ENCODE measurements at regions of chr9 and their contacts with region 1.

Region 1: DNA sequence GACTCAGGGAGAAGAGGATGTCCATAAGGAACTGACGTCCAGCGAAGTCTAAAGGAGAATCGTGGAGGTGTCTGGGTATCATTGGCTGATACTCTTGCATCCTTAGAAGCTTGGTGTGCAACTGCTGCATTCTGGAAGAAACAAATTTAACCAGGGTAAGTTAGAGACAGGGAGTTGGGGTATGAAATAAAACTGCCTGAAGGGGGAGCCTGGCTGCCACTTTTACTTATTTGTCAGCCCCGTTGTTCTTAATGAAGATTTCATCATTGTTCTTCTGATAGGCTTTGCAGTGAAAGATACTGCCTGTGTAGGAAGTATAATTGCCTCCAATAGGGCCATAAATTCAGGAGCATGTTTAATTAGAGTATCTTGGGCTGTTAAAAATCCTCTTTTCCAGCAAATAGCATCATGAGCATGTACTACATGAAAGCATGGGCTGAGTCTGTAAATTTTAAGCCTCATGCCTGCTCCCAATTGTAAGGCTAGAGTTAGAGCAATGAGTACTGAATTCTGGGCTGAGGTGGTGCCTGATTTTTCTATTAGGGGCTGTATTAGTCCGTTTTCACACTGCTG is 1264.5 kb upstream of the ACO1 start:
- DNase-seq: peak in 1 of 2 donors; percentile 5
- ATAC-seq: peak in 1 of 8 donors; percentile 51
- H3K4me3 ChIP-seq: no peak overlapping the region
- H3K27ac ChIP-seq: no peak overlapping the region
- H3K4me1 ChIP-seq: no peaks in the 10 kb centered on the region
- H3K27me3 ChIP-seq: peaks cover 0 to 4% (median 0%) of the 10 kb centered on the region in 7 donors
- CTCF ChIP-seq: peak in 8 of 9 donors; percentile 27 to 60 (median 54)

Region 2: DNA sequence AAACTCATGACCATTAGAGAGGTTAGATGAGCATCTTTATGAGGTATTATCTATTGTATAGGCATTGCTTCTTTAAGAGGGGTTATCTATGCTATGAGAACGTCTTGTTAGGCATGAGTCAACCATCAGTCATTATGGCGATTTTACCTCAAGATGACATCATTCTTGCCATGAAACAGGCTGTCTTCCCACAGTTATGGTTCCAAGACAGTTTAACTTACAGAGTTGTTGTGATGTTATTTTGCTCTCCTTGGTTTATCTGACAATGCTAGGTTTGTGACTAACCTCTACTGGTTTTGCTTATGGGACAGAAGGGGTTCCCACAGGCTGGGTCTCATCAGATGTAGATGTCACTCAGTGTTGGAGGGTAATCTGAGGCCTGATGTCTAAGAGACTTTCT is 600.2 kb before region 1 on chr9:
- intact Hi-C with region 1: no loop called
- DNase-seq: no peak
- ATAC-seq: no peak
- H3K4me3 ChIP-seq: no peak overlapping the region
- H3K27ac ChIP-seq: no peak overlapping the region
- H3K4me1 ChIP-seq: no peaks in the 10 kb centered on the region
- H3K27me3 ChIP-seq: no peaks in the 10 kb centered on the region
- CTCF ChIP-seq: no peak

Region 3: GRCh38 chr9:30995951-30996738 is 123.8 kb before region 1 on chr9:
- intact Hi-C with region 1: no loop called
- DNase-seq: no peak
- ATAC-seq: no peak
- H3K4me3 ChIP-seq: no peak overlapping the region
- H3K27ac ChIP-seq: no peak overlapping the region
- H3K4me1 ChIP-seq: no peaks in the 10 kb centered on the region
- H3K27me3 ChIP-seq: no peaks in the 10 kb centered on the region
- CTCF ChIP-seq: no peak

Region 4: GRCh38 chr9:31542384-31543055 is 422.6 kb after region 1 on chr9:
- intact Hi-C with region 1: loop called in 1 of 10 experiments (anchors 10 kb)
- DNase-seq: no peak
- ATAC-seq: peak in 4 of 8 donors; percentile 43 to 96 (median 54)
- H3K4me3 ChIP-seq: no peak overlapping the region
- H3K27ac ChIP-seq: no peak overlapping the region
- H3K4me1 ChIP-seq: peaks cover 0 to 11% (median 4%) of the 10 kb centered on the region in 9 donors
- H3K27me3 ChIP-seq: no peaks in the 10 kb centered on the region
- CTCF ChIP-seq: peak in 4 of 9 donors; percentile 30 to 41 (median 36)

Region 5: GRCh38 chr9:31799953-31800609 is 680.1 kb after region 1 on chr9:
- intact Hi-C with region 1: loop called in 4 of 10 experiments (anchors 2 to 10 kb)
- DNase-seq: no peak
- ATAC-seq: no peak
- H3K4me3 ChIP-seq: no peak overlapping the region
- H3K27ac ChIP-seq: no peak overlapping the region
- H3K4me1 ChIP-seq: no peaks in the 10 kb centered on the region
- H3K27me3 ChIP-seq: no peaks in the 10 kb centered on the region
- CTCF ChIP-seq: peak in 7 of 9 donors; percentile 36 to 52 (median 42)

Region 6: GRCh38 chr9:32251539-32251938 is 1131.6 kb after region 1 on chr9:
- intact Hi-C with region 1: loop called in 2 of 10 experiments (anchors 5 to 10 kb)
- DNase-seq: peak in 1 of 2 donors; percentile 34
- ATAC-seq: peak in 3 of 8 donors; percentile 43 to 56 (median 52)
- H3K4me3 ChIP-seq: no peak overlapping the region
- H3K27ac ChIP-seq: no peak overlapping the region
- H3K4me1 ChIP-seq: no peaks in the 10 kb centered on the region
- H3K27me3 ChIP-seq: no peaks in the 10 kb centered on the region
- CTCF ChIP-seq: peak in 8 of 9 donors; percentile 16 to 74 (median 62)

Region 7: DNA sequence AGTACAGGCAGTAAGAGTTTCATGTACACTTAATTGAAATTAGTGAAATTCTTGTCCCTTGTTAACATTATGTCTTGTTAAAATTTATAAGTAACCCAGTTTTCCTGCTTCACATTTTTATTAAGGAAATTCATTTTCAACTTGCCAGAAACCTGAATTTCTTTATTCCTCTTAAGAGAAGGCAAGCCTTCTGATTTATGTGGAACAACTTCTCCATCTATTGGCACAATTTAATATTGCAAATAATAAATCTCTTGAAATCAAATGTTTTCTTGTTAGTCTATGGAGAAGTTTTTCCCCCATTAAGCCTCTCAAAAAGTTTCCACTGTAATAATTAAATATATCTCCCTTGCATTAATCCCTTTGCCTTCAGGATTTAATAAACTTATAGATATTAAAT is 1230.7 kb after region 1 on chr9:
- intact Hi-C with region 1: loop called in 1 of 10 experiments (anchors 10 kb)
- DNase-seq: no peak
- ATAC-seq: no peak
- H3K4me3 ChIP-seq: no peak overlapping the region
- H3K27ac ChIP-seq: no peak overlapping the region
- H3K4me1 ChIP-seq: no peaks in the 10 kb centered on the region
- H3K27me3 ChIP-seq: peaks cover 0 to 4% (median 0%) of the 10 kb centered on the region in 7 donors
- CTCF ChIP-seq: peak in 7 of 9 donors; percentile 29 to 55 (median 49)

Measured in heart right ventricle (tissue), 16 donors.